Naive thymus-derived CD4-positive, alpha-beta T cell (primary cell): ENCODE measurements at regions of chr15 and their contacts with region 1.

Region 1: DNA sequence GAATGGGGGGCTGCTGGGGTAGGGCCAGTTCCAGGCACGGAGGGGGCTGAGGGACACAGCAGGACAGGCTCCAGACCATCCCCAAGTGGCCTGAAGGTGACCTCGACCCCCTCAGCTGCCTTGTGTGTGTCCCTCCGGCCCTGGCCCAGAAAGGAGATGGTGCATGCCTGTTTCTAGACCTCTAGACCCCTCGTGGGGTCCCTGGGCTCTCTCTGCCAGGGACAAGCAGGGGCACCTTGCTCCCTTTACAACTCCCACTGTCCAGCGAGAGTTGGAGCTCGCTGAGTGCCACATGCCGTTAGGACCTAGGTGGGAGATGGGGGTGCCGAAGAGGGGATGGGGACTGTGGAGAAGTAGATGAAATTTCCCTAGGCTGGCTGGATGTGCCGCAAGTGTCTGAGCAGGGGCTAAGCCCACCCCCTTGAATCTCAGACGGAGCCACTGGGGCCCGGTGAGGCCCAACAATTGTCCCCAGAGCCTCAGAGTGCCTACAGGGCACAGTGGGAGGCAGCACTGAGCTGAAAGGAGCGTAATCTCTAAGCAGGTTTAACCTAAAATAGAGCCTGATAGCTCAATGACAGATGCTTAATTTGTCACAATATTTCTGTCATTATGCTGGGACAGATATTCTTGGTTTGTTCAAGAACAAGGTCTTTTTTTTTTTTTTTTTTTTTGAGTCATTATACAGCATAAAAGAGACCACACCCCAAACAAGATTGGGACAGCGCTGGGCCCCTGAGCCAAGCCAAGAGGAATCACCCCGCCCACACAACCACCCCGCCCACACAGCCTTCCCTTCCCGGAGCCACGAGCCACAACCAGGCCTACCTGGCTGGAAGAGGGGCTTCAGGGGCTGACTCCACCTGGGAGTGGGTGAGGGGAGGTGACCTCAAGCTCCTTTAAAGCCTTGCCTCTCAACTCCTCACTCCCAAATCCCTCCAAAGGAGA is 23.6 kb upstream of the KLF13 start:
- DNase-seq: peak in 2 of 9 donors; percentile 30 to 44
- ATAC-seq: peak; percentile 63
- H3K4me3 ChIP-seq: no peak overlapping the region
- H3K4me3 Mint-ChIP-seq: peak overlapping the region in 3 of 10 donors; percentile 5 to 51 (median 15)
- H3K27ac ChIP-seq: no peak overlapping the region
- H3K27ac Mint-ChIP-seq: peak overlapping the region in 7 of 9 donors; percentile 22 to 75 (median 61)
- H3K4me1 ChIP-seq: peaks cover 0 to 31% of the 10 kb centered on the region in 2 donors
- H3K4me1 Mint-ChIP-seq: peaks cover 17 to 52% (median 35%) of the 10 kb centered on the region in 7 donors
- H3K27me3 ChIP-seq: no peaks in the 10 kb centered on the region
- H3K27me3 Mint-ChIP-seq: peaks cover 0 to 6% (median 0%) of the 10 kb centered on the region in 5 donors

Region 2: GRCh38 chr15:31274484-31275330 is 28.3 kb before region 1 on chr15:
- CTCF ChIA-PET with region 1: no interaction called
- POLR2A ChIA-PET with region 1: interaction called, 4 read pairs
- intact Hi-C with region 1: loop called in 1 of 2 experiments (anchors 2 kb)
- DNase-seq: peak in 1 of 9 donors; percentile 17
- ATAC-seq: no peak
- H3K4me3 ChIP-seq: no peak overlapping the region
- H3K4me3 Mint-ChIP-seq: no peak overlapping the region
- H3K27ac ChIP-seq: no peak overlapping the region
- H3K27ac Mint-ChIP-seq: peak overlapping the region; percentile 21 to 76 (median 47)
- H3K4me1 ChIP-seq: peaks cover 0 to 20% of the 10 kb centered on the region in 2 donors
- H3K4me1 Mint-ChIP-seq: peaks cover 37 to 54% (median 44%) of the 10 kb centered on the region in 7 donors
- H3K27me3 ChIP-seq: no peaks in the 10 kb centered on the region
- H3K27me3 Mint-ChIP-seq: no peaks in the 10 kb centered on the region